HCT116 (cell line): ENCODE measurements at regions of chrX and their contacts with region 1.

Region 1: GRCh38 chrX:49291615-49292337 is 11.7 kb upstream of the GAGE10 start:
- DNase-seq: peak; percentile 51
- ATAC-seq: peak; percentile 97
- H3K4me3 ChIP-seq: no peak overlapping the region
- H3K27ac ChIP-seq: no peak overlapping the region
- H3K4me1 ChIP-seq: no peaks in the 10 kb centered on the region
- H3K27me3 ChIP-seq: no peaks in the 10 kb centered on the region
- CTCF ChIP-seq: peak; percentile 54 to 63 (median 60); a peak in 5 of 6 replicates
- POLR2A ChIP-seq: no peak
- RAD21 ChIP-seq: peak; percentile 61

Region 2: DNA sequence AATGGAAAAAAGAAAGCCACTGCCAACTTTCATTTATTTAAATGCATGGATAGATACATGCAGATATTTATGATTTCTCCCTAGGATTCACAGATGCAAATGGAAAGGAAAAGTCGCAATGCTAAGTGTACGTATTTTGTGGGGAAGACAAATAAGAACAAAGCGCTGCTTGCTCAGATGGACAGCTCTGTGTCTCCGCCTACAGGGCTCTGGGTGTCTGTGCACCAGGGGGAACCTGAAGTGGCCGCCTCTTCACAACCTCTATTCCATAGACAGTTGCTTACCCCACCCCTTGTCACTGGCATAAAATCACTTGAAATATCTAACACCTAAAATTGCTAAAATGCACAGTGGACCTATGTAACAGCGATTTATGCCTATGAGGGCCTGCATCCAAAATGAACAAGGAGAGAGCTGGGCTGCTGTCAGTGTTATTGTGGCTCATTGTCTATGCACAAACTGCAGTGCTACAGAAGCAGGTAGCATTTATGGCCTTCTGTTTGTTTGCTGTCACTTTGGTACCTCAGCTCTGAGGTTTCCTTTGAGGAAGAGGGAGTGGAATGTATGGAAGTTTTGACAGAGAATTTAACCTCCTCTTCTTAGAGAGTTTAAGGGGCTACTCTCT is 462.6 kb after region 1 on chrX:
- CTCF ChIA-PET with region 1: interaction called, 4 read pairs
- POLR2A ChIA-PET with region 1: no interaction called
- RAD21 ChIA-PET with region 1: no interaction called
- intact Hi-C with region 1: loop called (anchors 5 kb)
- DNase-seq: peak; percentile 10
- ATAC-seq: peak; percentile 85
- H3K4me3 ChIP-seq: no peak overlapping the region
- H3K27ac ChIP-seq: no peak overlapping the region
- H3K4me1 ChIP-seq: no peaks in the 10 kb centered on the region
- H3K27me3 ChIP-seq: peaks cover 50% of the 10 kb centered on the region
- CTCF ChIP-seq: peak; percentile 37 to 73 (median 62); a peak in 5 of 6 replicates
- POLR2A ChIP-seq: no peak
- RAD21 ChIP-seq: peak; percentile 64; the same call in 1 of the 2 replicates